ENCODE measurements at regions of chr11 and their contacts with region 1.

Region 1: DNA sequence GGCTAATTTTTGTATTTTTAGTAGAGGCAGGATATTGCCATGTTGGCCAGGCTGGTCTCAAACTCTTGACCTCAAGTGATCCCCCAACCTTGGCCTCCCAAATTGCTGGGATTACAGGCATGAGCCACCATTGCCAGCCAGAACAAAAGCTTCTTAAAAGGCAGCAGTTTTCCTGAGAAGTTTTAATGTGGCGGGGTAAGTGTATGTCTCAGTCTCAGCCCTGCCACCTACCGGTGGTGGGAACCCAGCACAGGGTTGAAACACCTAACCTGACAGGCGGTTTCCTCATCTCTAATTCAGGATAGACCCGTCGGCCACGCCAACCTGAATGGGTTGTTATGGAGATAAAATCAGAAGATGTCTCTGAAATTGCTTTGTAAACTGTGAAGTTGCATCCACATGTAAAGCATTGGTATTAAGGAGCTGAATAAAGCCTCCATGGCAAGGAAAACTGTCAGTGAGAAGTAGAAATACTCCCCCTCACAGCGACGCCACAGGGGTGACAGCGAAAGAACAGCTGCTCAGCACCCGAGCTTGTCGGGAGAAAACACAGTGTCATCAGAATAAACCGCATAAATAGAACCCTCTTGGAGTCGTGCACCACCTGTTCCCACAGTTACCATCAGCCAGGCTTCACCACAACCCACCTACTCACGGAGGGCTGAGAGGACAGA is 165.9 kb upstream of the NCAM1 start:
- DNase-seq: peak; percentile 47
- H3K4me3 Mint-ChIP-seq: no peak overlapping the region
- H3K27ac Mint-ChIP-seq: no peak overlapping the region
- H3K4me1 Mint-ChIP-seq: peaks cover 1% of the 10 kb centered on the region
- H3K27me3 Mint-ChIP-seq: no peaks in the 10 kb centered on the region

Region 2: DNA sequence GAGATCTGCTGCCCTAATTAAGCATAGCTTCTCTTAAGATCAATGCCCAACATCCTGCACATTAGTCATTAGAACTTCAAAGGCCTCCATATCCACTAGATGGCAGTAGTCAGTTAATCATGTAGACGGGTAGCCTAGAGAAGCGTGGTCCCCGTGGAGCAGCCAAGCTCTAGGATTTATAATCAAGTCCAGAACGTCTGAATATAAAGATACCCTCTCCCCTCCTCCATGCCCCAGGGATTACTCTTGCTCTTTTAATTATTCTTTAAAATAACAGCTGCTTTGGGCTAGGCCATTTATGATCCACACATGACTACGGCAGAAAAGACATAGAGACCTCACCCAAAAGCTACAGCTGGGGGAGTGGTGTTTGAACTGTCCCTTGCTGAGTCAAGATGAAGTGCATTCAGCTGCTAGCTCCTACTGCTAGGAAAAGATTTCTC is 207.0 kb before region 1 on chr11:
- CTCF ChIA-PET with region 1: interaction called, 22 read pairs
- POLR2A ChIA-PET with region 1: no interaction called
- DNase-seq: peak; percentile 45
- H3K4me3 Mint-ChIP-seq: no peak overlapping the region
- H3K27ac Mint-ChIP-seq: no peak overlapping the region
- H3K4me1 Mint-ChIP-seq: peaks cover 5% of the 10 kb centered on the region
- H3K27me3 Mint-ChIP-seq: peaks cover 3% of the 10 kb centered on the region

Region 3: DNA sequence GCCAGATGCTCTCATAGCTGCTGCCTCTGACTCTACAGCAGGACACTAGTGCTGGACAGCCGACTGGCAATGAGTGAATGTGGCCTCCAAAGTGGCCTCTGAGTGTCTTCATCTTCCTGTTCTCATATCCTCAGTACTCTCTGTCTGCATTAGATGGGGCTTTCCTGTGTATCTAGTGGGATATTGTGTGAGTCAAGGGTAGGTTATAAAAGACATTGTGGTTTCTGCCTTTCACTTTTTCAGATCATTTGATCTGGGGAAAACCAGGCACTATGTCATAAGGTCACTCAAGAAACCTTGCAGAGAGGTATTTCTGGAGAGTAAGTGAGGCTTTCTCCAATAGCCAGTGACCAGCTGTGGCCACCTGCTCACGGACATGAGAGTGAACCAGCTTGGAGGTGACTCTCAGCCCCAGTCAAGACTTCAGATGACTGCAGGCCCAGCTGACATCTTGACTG is 167.7 kb before region 1 on chr11:
- CTCF ChIA-PET with region 1: no interaction called
- POLR2A ChIA-PET with region 1: no interaction called
- DNase-seq: no peak
- H3K4me3 Mint-ChIP-seq: no peak overlapping the region
- H3K27ac Mint-ChIP-seq: no peak overlapping the region
- H3K4me1 Mint-ChIP-seq: no peaks in the 10 kb centered on the region
- H3K27me3 Mint-ChIP-seq: peaks cover 14% of the 10 kb centered on the region

Region 4: GRCh38 chr11:112777283-112777751 is 18.0 kb before region 1 on chr11:
- CTCF ChIA-PET with region 1: no interaction called
- POLR2A ChIA-PET with region 1: no interaction called
- DNase-seq: no peak
- H3K4me3 Mint-ChIP-seq: no peak overlapping the region
- H3K27ac Mint-ChIP-seq: no peak overlapping the region
- H3K4me1 Mint-ChIP-seq: no peaks in the 10 kb centered on the region
- H3K27me3 Mint-ChIP-seq: peaks cover 4% of the 10 kb centered on the region